CD4-positive, alpha-beta T cell (primary cell): ENCODE measurements at regions of chr12 and their contacts with region 1.

Region 1: DNA sequence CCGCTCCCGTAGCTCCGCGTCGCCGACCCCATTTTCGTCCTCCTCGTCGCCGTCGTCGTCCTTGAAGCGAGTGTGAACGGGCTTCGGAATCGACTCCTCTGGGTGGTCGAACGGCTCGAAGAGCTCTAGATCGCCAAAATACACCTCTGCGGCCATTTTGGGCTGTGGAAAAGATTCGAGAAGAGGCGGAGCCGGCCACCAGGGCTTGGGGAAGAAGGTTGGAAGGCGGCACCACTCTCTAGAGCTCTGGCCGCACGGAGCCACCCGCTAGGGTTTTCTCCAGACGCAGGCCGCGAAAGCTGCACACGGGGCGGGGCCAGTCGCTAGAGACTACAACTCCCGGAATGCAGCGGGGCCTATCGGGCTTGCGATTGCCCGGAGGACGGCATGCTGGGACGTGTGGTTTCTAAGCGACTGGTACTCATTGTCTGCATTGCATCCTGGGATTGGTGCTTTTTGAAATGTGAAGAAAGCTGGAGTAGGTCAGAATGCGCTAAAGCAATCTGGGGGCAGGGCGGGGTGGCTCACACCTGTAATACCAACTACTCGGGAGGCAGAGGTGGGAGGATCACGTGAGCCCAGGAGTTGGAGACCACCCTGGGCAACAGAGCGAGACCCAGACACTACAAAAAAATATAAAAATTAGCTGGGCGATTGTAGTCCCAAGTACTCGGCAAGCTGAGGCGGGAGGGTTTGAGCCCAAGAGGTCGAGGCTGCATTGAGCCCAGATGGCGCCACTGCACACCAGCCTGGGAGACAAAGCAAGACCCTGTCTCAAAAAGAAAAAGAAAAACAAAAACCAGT is at the start of gene ZCCHC8:
- DNase-seq: peak; percentile 91 to 99 (median 96)
- ATAC-seq: peak; percentile 92
- H3K4me3 ChIP-seq: peak within 1 kb of the TSS; percentile 80
- H3K4me3 Mint-ChIP-seq: peak within 1 kb of the TSS; percentile 96
- H3K27ac ChIP-seq: peak within 1 kb of the TSS; percentile 88 to 89
- H3K27ac Mint-ChIP-seq: peak within 1 kb of the TSS; percentile 97
- H3K4me1 ChIP-seq: peaks cover 43% of the 10 kb centered on the region
- H3K4me1 Mint-ChIP-seq: peaks cover 49% of the 10 kb centered on the region
- H3K27me3 ChIP-seq: no peaks in the 10 kb centered on the region
- H3K27me3 Mint-ChIP-seq: no peaks in the 10 kb centered on the region
- CTCF ChIP-seq: no peak
- total RNA-seq, gene ZCCHC8: 49.4 to 54.8 TPM

Region 2: DNA sequence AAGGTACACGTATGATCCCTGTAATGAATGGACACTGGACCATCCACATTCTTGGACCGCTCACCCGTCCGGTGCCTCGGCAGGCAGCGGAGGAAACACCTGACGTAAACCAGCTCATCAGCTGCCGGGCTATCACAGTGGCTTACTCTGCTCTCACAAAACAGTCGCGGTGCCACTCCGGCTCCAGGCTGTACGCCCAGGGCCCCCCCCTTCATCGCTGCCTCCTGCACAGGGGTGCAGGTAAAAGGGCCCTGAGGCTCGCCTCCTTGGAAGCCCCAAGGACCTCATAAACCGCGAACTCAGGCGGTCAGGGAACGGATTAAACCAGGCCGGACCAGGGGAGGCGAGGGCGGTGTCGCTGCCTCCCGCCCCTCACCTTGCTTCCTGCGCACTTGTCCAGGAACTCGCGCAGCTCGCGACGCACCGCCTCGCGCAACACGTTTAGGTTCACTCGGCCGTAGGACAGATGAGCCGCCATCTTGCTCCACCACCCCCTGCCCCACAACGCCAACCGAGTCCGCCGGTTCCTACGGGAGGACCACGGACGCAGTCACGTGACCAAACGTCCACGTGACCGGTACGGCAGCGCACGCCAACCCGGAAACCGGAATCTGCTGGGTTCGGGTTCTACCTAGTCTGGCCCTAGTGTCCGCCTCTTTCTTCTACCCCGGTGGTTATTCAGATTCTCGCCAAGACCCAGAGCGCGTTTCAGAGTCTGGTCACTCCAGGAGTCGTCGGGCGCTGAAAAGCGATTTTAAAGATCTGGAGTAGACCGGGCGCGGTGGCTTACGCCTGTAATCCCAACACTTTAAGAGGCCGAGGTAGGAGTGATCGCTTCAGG is 234.7 kb before region 1 on chr12 and contains the start of gene VPS33A:
- CTCF ChIA-PET with region 1: no interaction called
- POLR2A ChIA-PET with region 1: interaction called, 4 read pairs
- intact Hi-C with region 1: loop called in 1 of 2 experiments (anchors 10 kb)
- DNase-seq: peak; percentile 85 to 97 (median 88)
- ATAC-seq: peak; percentile 68
- H3K4me3 ChIP-seq: peak within 1 kb of the TSS; percentile 85
- H3K4me3 Mint-ChIP-seq: peak within 1 kb of the TSS; percentile 100
- H3K27ac ChIP-seq: peak within 1 kb of the TSS; percentile 94 to 97
- H3K27ac Mint-ChIP-seq: peak within 1 kb of the TSS; percentile 99
- H3K4me1 ChIP-seq: peaks cover 25% of the 10 kb centered on the region
- H3K4me1 Mint-ChIP-seq: peaks cover 33% of the 10 kb centered on the region
- H3K27me3 ChIP-seq: no peaks in the 10 kb centered on the region
- H3K27me3 Mint-ChIP-seq: peaks cover 8% of the 10 kb centered on the region
- CTCF ChIP-seq: no peak
- total RNA-seq, gene VPS33A: 12.0 to 14.2 TPM

Region 3: DNA sequence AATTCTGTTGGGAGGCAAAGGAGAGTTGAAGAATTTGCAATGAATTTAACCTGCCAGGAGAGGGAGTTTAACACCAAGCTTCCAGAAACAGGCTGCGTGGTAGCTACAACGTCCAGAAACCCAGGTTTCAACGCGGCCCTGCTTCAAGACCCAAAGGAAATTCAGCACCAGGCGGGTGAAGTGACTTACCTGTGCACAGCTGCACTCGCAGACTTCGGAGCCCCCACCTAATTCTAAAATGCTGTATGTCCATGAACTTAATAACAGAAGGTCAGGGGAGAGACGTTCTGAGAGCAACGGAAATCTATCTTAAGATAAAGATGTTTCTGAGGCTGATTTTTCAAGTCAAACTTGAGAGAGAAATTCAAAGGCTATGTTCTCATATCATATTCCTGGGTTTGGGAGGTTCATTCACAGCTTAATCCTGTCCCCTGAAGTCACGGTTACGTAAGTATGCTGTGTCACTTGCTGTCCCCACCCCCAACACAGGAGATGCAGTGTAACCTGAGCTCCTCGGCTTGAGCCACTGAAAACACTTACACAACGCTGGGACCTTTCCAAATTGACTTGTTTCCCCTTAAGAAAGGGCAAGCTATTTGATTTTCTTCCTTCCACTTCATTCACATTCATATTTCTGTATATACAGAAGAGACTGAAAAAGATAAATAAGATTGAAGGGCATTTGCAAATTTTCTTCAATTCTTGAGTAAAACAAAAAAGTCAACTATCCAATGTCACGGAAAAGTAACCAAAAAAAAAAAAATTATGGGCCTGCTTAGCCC is 101.1 kb before region 1 on chr12:
- CTCF ChIA-PET with region 1: interaction called, 7 read pairs
- POLR2A ChIA-PET with region 1: interaction called, 16 read pairs
- intact Hi-C with region 1: no loop called
- DNase-seq: peak; percentile 35 to 84 (median 48)
- ATAC-seq: peak; percentile 83
- H3K4me3 ChIP-seq: peak overlapping the region; percentile 8
- H3K4me3 Mint-ChIP-seq: peak overlapping the region; percentile 72
- H3K27ac ChIP-seq: peak overlapping the region; percentile 0 to 35
- H3K27ac Mint-ChIP-seq: peak overlapping the region; percentile 87
- H3K4me1 ChIP-seq: peaks cover 17% of the 10 kb centered on the region
- H3K4me1 Mint-ChIP-seq: peaks cover 41% of the 10 kb centered on the region
- H3K27me3 ChIP-seq: no peaks in the 10 kb centered on the region
- H3K27me3 Mint-ChIP-seq: no peaks in the 10 kb centered on the region
- CTCF ChIP-seq: peak; percentile 79

Region 4: GRCh38 chr12:122452701-122453285 is 48.1 kb before region 1 on chr12:
- CTCF ChIA-PET with region 1: no interaction called
- POLR2A ChIA-PET with region 1: interaction called, 7 read pairs
- intact Hi-C with region 1: loop called in 1 of 2 experiments (anchors 2 kb)
- DNase-seq: peak in 4 of 14 experiments; percentile 3 to 35 (median 28)
- ATAC-seq: peak; percentile 22
- H3K4me3 ChIP-seq: no peak overlapping the region
- H3K4me3 Mint-ChIP-seq: peak overlapping the region; percentile 81
- H3K27ac ChIP-seq: peak overlapping the region; percentile 39 to 51
- H3K27ac Mint-ChIP-seq: peak overlapping the region; percentile 91
- H3K4me1 ChIP-seq: peaks cover 27% of the 10 kb centered on the region
- H3K4me1 Mint-ChIP-seq: peaks cover 30% of the 10 kb centered on the region
- H3K27me3 ChIP-seq: no peaks in the 10 kb centered on the region
- H3K27me3 Mint-ChIP-seq: no peaks in the 10 kb centered on the region
- CTCF ChIP-seq: no peak

Region 5: DNA sequence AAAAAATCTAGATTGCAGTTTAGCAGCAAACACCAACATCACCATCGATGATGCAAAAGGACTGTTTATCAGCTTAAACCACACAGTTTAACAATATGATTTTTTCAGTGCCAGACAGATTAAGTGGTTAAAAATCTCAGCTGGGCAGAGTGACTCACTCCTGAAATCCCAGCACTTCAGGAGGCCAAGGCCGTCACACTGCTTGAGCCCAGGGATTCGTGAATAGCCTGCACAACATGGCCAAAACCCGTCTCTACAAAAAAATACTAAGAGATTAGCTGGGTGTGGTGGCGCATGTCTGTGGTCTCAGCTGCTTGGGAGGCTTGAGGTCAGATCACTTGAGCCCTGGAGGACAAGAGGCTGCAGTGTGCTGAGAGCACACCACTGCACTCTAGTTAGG is 17.0 kb after region 1 on chr12:
- CTCF ChIA-PET with region 1: interaction called, 6 read pairs
- POLR2A ChIA-PET with region 1: interaction called, 208 read pairs
- intact Hi-C with region 1: no loop called
- DNase-seq: no peak
- ATAC-seq: no peak
- H3K4me3 ChIP-seq: no peak overlapping the region
- H3K4me3 Mint-ChIP-seq: no peak overlapping the region
- H3K27ac ChIP-seq: no peak overlapping the region
- H3K27ac Mint-ChIP-seq: no peak overlapping the region
- H3K4me1 ChIP-seq: peaks cover 7% of the 10 kb centered on the region
- H3K4me1 Mint-ChIP-seq: peaks cover 38% of the 10 kb centered on the region
- H3K27me3 ChIP-seq: no peaks in the 10 kb centered on the region
- H3K27me3 Mint-ChIP-seq: no peaks in the 10 kb centered on the region
- CTCF ChIP-seq: no peak

Region 6: DNA sequence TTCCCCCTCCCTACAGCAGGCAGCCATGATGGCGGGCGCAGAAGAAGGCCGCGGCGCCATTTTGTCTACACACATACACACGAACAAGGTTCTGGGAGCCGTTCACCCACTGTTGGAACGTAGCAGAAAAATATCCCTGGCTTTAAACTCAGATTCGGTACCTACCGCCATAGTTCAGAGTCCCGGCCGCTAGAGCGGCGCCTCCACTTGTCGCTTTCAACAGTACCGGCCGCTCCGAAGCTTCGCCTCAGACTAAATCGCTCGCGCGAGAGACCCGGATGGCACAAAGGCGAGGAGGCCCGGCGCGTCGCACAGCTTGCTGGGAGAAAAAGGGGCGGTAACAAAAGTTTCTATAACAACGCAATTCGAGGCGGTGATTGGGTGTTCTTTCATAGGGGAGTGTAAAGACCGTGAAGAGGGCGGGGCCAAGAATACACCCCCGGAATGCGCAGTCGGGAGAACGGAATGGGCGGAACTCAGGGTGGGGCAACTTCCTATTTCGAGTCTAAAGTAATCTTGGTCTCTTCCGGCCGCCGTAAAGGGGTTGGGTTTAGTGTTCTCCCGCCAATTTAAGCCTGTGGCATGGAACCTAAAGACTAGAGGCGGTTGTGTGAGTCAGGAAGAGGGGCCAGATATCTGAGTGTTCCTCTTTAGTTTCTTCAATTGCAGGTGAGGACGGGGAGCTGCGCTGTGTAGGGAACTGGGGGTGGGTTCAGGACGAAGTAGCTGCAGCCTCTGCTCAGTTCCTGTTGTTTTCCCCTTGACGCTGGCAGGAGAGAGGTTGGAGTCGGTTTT is 26.0 kb after region 1 on chr12 and contains the starts of genes KNTC1 and RSRC2:
- CTCF ChIA-PET with region 1: interaction called, 22 read pairs
- POLR2A ChIA-PET with region 1: interaction called, 208 read pairs
- intact Hi-C with region 1: loop called (anchors 1 kb)
- DNase-seq: peak; percentile 93 to 100 (median 96)
- ATAC-seq: peak; percentile 90
- H3K4me3 ChIP-seq: peak within 1 kb of the TSS; percentile 97
- H3K4me3 Mint-ChIP-seq: no peak within 1 kb of the TSS
- H3K27ac ChIP-seq: peak within 1 kb of the TSS; percentile 98 to 99
- H3K27ac Mint-ChIP-seq: no peak within 1 kb of the TSS
- H3K4me1 ChIP-seq: peaks cover 21% of the 10 kb centered on the region
- H3K4me1 Mint-ChIP-seq: peaks cover 36% of the 10 kb centered on the region
- H3K27me3 ChIP-seq: no peaks in the 10 kb centered on the region
- H3K27me3 Mint-ChIP-seq: no peaks in the 10 kb centered on the region
- CTCF ChIP-seq: no peak
- total RNA-seq, gene KNTC1: 23.3 to 23.8 TPM
- total RNA-seq, gene RSRC2: 339 to 341 TPM

Region 7: DNA sequence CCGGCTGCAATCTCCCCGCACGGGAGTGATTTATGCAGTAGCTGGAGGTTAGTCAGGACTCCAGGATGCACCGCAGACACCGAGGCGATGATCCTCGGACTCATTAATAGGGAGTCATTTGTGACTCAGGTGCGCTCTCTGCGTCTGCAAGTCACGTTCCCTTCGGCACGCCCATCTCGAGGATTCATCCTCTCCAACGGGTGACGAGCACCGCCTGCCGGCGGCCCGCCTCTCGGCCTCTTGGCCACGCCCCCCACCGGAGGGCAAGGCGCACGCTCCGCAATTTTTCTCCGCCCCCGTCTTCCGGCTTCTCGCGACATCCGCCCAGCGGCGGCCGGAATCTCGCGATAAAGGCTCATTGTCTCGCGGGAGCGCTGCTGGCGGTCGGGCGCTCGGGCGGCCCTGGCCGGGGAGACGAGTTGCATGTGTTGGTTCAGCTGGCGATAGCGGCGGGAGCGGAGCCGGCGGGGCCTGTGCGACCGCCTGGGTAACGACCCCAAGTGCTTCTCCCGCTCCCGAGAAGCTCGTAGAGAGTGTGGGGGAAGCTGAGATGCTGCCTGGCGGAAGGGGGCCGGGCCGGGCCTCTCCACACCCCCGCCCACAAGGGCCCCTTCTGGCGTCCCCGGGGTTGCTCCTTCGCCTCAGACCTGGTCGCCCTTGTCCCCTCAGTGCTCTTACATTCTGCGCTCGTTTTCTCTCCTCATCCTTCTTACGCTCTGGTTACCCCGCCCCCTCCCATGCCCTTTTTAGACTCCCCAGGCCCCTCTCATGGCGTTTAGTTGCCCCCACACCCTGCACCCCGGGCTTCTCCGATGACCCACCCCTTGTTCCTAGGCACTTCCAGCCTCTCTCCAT is 251.8 kb after region 1 on chr12 and contains the start of gene DENR:
- CTCF ChIA-PET with region 1: interaction called, 7 read pairs
- POLR2A ChIA-PET with region 1: interaction called, 17 read pairs
- intact Hi-C with region 1: loop called in 1 of 2 experiments (anchors 1 kb)
- DNase-seq: peak; percentile 99 to 100 (median 99)
- ATAC-seq: peak; percentile 92
- H3K4me3 ChIP-seq: peak within 1 kb of the TSS; percentile 89
- H3K4me3 Mint-ChIP-seq: peak within 1 kb of the TSS; percentile 96
- H3K27ac ChIP-seq: peak within 1 kb of the TSS; percentile 86 to 89
- H3K27ac Mint-ChIP-seq: peak within 1 kb of the TSS; percentile 97
- H3K4me1 ChIP-seq: peaks cover 21% of the 10 kb centered on the region
- H3K4me1 Mint-ChIP-seq: peaks cover 57% of the 10 kb centered on the region
- H3K27me3 ChIP-seq: no peaks in the 10 kb centered on the region
- H3K27me3 Mint-ChIP-seq: no peaks in the 10 kb centered on the region
- CTCF ChIP-seq: peak; percentile 76
- total RNA-seq, gene DENR: 29.9 to 31.1 TPM